Right ventricle myocardium superior (tissue), 1 donor: ENCODE measurements at regions of chr5 and their contacts with region 1.

Region 1: GRCh38 chr5:179821581-179822432 is 1.1 kb downstream of the SQSTM1 start:
- DNase-seq: peak; percentile 97
- ATAC-seq: peak; percentile 78

Region 2: GRCh38 chr5:179596421-179596820 is 225.4 kb before region 1 on chr5:
- intact Hi-C with region 1: no loop called
- DNase-seq: no peak
- ATAC-seq: no peak

Region 3: DNA sequence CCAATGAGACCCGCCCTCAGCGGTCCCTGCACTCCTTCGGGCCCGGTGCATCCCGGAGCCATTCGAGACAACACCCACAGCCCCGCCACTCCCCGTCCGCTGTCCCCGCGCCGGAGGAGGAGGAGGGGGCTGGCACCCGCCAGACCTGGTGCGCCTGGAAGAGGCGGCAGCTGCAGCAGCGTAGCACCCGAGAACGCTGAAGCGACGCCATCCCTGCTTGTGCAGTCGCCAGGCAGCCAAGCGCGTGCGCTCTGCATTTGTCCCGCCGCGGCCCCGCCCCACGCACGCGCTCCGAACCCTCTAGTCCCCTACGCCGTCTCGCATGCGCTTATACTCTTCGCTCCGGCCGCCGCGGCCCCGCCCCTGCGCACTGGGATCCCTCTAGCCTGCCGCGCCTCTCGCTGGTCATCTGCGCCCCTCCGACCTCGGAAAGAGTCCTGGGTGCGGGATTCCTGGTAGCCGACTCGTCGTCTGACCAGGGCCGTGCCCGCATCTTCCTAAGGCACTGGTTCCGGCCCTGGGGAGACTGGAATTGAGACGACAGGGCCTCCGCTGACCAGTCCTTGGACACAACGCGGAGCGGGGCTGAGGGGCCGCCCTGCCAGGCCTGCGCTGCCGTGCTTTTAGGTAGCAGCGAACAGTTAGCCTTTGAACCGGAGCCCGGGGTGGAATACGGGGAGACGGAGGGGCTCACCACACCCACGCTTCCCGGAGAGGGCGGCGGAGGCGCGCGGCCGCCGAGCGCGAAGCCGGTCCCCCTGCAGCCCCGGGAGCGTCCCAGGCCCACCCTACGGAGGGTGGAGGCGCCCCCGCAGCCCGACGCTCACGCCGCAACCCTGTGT is 37.0 kb after region 1 on chr5 and contains the start of gene MRNIP:
- intact Hi-C with region 1: loop called (anchors 5 kb)
- DNase-seq: peak; percentile 99
- ATAC-seq: peak; percentile 99
- total RNA-seq, gene MRNIP: 12.1 TPM